AG04449 (cell line): ENCODE measurements at regions of chr11 and their contacts with region 1.

Region 1: DNA sequence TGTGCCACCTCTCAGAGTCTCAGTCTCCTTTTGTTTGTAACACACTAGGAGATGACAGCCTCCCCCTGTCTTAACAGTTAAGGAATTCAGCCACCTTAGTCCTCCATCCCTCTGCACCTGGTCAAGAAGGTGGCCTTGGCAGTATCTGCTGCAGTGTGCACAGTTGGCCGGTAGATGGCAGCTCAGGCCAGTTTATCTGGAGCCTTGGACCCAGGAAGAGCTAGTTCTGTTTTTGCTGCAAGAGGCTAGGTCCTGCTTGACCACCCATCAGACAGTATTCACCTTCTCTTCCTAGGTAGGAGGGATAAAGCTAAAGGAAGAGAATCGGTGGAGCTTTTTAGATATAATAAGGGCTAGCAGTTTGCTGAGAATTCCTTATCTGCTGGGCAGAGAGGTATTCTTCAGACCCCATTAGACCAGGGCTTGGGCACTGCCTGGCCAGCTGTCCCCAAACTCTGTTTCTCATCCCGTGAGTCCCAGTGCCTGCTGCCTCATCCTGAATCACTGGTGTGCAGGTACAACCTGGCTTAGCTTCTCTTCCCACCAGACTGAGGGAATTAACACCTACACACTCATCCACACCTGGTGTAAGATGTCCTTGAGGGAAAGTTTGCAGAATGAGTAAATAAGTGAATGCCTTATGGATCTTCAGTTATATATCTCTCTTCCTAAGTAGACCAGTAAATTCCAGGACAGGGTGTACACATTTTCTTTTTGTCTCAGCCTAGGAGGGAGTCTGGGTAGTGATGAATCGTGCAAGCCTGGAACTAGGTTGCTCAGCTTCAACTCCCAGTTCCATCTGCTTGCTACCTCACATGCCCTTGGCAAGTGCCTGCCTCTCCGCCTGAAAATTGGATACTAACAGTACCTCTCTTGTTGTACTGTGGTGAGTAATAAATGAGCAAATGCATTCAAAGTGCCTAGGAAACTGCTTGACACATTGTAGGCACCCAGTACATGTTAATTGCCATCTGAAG is 70.8 kb upstream of the NARS2 start:
- DNase-seq: no peak
- H3K4me3 ChIP-seq: no peak overlapping the region
- CTCF ChIP-seq: peak; percentile 91

Region 2: GRCh38 chr11:78557236-78557635 is 88.3 kb before region 1 on chr11:
- CTCF ChIA-PET with region 1: no interaction called
- POLR2A ChIA-PET with region 1: no interaction called
- DNase-seq: no peak
- H3K4me3 ChIP-seq: no peak overlapping the region
- CTCF ChIP-seq: no peak

Region 3: DNA sequence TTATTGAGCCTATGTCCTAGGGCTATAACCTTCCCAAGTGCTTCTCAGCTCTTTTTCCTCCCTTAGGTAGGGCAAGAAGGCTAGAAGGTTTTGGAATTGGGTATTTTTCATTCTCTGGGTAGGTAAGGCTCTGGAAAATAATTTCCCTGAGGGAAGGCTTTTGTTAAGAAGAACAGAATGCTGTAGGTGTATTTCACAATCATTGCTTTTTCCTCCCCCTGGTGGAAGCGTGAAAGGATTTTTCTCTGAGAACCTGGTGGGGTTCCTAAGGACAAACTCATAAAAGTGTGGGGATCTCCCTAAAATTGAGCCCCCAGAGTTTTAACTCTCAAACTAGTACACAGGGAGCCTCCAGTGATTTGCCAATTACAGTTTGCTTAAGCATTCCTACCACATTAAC is 29.8 kb before region 1 on chr11:
- CTCF ChIA-PET with region 1: no interaction called
- POLR2A ChIA-PET with region 1: no interaction called
- DNase-seq: no peak
- H3K4me3 ChIP-seq: no peak overlapping the region
- CTCF ChIP-seq: no peak

Region 4: DNA sequence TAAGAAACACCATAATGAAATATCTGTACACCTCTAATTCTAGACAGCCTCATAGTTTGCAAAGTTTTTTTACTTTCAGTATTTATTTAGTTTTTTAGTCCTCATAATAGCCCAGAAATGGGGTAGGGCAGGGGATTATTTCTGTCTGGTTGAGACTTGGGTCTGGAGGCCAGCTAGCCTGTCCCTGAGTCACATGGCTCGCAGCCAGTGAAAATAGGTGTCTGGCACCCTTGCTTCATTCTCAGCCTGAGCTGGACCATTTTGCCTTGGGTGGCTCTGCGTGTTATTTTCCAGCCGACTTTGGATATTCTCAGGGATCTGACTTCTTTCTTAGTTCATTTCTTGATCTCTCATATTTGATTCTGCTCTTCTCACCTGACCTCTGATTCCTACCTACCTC is 53.1 kb after region 1 on chr11:
- CTCF ChIA-PET with region 1: interaction called, 10 read pairs
- POLR2A ChIA-PET with region 1: no interaction called
- DNase-seq: peak; percentile 26
- H3K4me3 ChIP-seq: no peak overlapping the region
- CTCF ChIP-seq: no peak

Region 5: GRCh38 chr11:78798660-78799059 is 153.1 kb after region 1 on chr11:
- CTCF ChIA-PET with region 1: interaction called, 34 read pairs
- POLR2A ChIA-PET with region 1: no interaction called
- DNase-seq: no peak
- H3K4me3 ChIP-seq: no peak overlapping the region
- CTCF ChIP-seq: peak; percentile 93

Region 6: GRCh38 chr11:78916759-78917158 is 271.2 kb after region 1 on chr11:
- CTCF ChIA-PET with region 1: interaction called, 16 read pairs
- POLR2A ChIA-PET with region 1: no interaction called
- DNase-seq: no peak
- H3K4me3 ChIP-seq: no peak overlapping the region
- CTCF ChIP-seq: no peak

Region 7: DNA sequence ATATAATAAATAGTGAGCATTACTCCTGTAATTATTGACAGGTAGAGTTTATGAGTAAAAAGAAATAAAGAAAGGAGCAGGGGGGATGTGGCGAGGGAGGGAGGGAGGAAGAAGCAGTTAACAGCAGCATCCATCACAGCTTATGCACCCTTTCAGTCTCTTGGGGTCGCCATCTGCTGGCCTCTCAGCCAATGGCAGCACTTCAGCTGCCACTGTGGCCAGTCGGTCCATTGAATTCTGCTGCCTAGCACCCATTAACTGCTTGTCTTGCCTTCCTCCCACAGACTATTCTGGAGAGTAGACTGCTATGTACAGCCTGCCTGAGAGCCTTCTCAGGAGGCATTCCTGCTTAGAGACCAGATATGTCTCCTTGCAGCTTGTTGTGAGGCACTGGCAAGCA is 407.0 kb after region 1 on chr11:
- CTCF ChIA-PET with region 1: interaction called, 45 read pairs
- POLR2A ChIA-PET with region 1: no interaction called
- DNase-seq: no peak
- H3K4me3 ChIP-seq: no peak overlapping the region
- CTCF ChIP-seq: peak; percentile 38

Region 8: GRCh38 chr11:79087238-79087960 is 441.9 kb after region 1 on chr11:
- CTCF ChIA-PET with region 1: interaction called, 25 read pairs
- POLR2A ChIA-PET with region 1: no interaction called
- DNase-seq: peak; percentile 65
- H3K4me3 ChIP-seq: no peak overlapping the region
- CTCF ChIP-seq: no peak